ENCODE measurements at regions of chr1 and their contacts with region 1.

Region 1: GRCh38 chr1:160951443-160952128 is 3.0 kb downstream of the ITLN2 start:
- DNase-seq: no peak
- H3K4me3 ChIP-seq: no peak overlapping the region
- H3K27ac ChIP-seq: no peak overlapping the region
- H3K27me3 ChIP-seq: peaks cover 6% of the 10 kb centered on the region
- CTCF ChIP-seq: peak; percentile 71

Region 2: GRCh38 chr1:160618763-160619274 is 332.8 kb before region 1 on chr1:
- CTCF ChIA-PET with region 1: no interaction called
- POLR2A ChIA-PET with region 1: no interaction called
- DNase-seq: no peak
- H3K4me3 ChIP-seq: no peak overlapping the region
- H3K27ac ChIP-seq: no peak overlapping the region
- H3K27me3 ChIP-seq: no peaks in the 10 kb centered on the region
- CTCF ChIP-seq: peak; percentile 25; the same call in 1 of the 2 replicates

Region 3: GRCh38 chr1:160726498-160727315 is 224.9 kb before region 1 on chr1:
- CTCF ChIA-PET with region 1: interaction called, 15 read pairs
- POLR2A ChIA-PET with region 1: no interaction called
- DNase-seq: peak; percentile 15
- H3K4me3 ChIP-seq: no peak overlapping the region
- H3K27ac ChIP-seq: no peak overlapping the region
- H3K27me3 ChIP-seq: no peaks in the 10 kb centered on the region
- CTCF ChIP-seq: peak; percentile 64

Region 4: GRCh38 chr1:160837558-160838205 is 113.9 kb before region 1 on chr1:
- CTCF ChIA-PET with region 1: interaction called, 59 read pairs
- POLR2A ChIA-PET with region 1: no interaction called
- DNase-seq: no peak
- H3K4me3 ChIP-seq: no peak overlapping the region
- H3K27ac ChIP-seq: no peak overlapping the region
- H3K27me3 ChIP-seq: no peaks in the 10 kb centered on the region
- CTCF ChIP-seq: no peak